Activated CD8-positive, alpha-beta memory T cell treated with anti-CD3 and anti-CD28 coated beads, Interleukin-2, amount 10 ng/mL, durations not matched to agents 7 days and 5 days (primary cell): ENCODE measurements at regions of chr1 and their contacts with region 1.

Region 1: GRCh38 chr1:154747740-154748404 is 122.2 kb downstream of the KCNN3 start:
- DNase-seq: peak; percentile 82
- ATAC-seq: peak; percentile 81
- H3K4me3 Mint-ChIP-seq: peak overlapping the region; percentile 46
- H3K27ac Mint-ChIP-seq: peak overlapping the region; percentile 76
- H3K4me1 Mint-ChIP-seq: peaks cover 54% of the 10 kb centered on the region
- H3K27me3 Mint-ChIP-seq: peaks cover 81% of the 10 kb centered on the region

Region 2: GRCh38 chr1:154627257-154628120 is 120.4 kb before region 1 on chr1:
- CTCF ChIA-PET with region 1: no interaction called
- DNase-seq: peak; percentile 95
- ATAC-seq: peak; percentile 83
- H3K4me3 Mint-ChIP-seq: peak overlapping the region; percentile 92
- H3K27ac Mint-ChIP-seq: peak overlapping the region; percentile 97
- H3K4me1 Mint-ChIP-seq: peaks cover 41% of the 10 kb centered on the region
- H3K27me3 Mint-ChIP-seq: peaks cover 13% of the 10 kb centered on the region

Region 3: GRCh38 chr1:154791292-154792166 is 43.7 kb after region 1 on chr1:
- CTCF ChIA-PET with region 1: interaction called, 11 read pairs
- DNase-seq: peak; percentile 93
- ATAC-seq: peak; percentile 96
- H3K4me3 Mint-ChIP-seq: peak overlapping the region; percentile 25
- H3K27ac Mint-ChIP-seq: peak overlapping the region; percentile 80
- H3K4me1 Mint-ChIP-seq: peaks cover 32% of the 10 kb centered on the region
- H3K27me3 Mint-ChIP-seq: peaks cover 35% of the 10 kb centered on the region